IMR-90 (cell line): ENCODE measurements at regions of chr4 and their contacts with region 1.

Region 1: DNA sequence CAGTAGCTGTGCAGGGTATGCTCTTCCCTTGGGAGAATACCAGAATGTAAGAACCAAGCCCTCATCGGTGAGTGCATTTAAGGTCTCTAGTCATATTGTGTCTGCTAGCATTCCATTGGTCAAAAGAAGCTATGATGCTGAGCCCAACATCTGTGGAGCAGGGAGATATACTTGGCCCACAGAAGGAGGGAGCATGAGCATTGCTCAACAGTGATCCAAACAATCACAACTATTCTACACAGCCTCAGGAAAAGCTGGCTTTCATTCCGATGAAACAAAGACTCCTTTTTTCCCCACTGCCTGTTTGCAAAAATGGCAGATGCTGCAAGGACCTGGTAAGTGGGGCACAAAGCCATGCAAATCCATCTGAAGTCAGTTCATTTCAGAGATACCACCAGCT is 80.6 kb upstream of the DHX15 start:
- DNase-seq: peak; percentile 55
- ATAC-seq: peak; percentile 96
- H3K4me3 ChIP-seq: no peak overlapping the region
- H3K27ac ChIP-seq: peak overlapping the region; percentile 72; the same call in 1 of the 2 replicates
- H3K4me1 ChIP-seq: peaks cover 5% of the 10 kb centered on the region
- H3K27me3 ChIP-seq: peaks cover 21% of the 10 kb centered on the region
- CTCF ChIP-seq: no peak
- POLR2A ChIP-seq: no peak
- RAD21 ChIP-seq: no peak

Region 2: DNA sequence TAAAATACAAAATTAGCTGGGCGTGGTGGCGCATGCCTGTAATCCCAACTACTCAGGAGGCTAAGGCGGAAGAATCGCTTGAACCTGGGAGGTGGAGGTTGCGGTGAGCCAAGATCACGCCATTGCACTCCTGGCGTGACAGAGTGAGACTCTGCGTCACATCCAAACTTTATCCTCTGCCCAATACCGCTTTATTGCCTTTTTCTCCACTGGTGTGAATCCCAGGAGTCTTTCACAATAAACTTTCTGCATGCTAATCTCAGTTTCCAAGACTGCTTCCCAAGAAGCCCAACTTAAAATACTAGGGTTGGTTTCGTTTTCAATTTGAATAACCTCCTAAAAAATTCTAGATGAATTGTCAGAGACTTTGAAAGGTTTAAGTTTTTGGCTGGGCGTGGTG is 53.4 kb before region 1 on chr4:
- CTCF ChIA-PET with region 1: no interaction called
- POLR2A ChIA-PET with region 1: no interaction called
- dilution Hi-C with region 1: no loop called
- in situ Hi-C with region 1: no loop called
- intact Hi-C with region 1: no loop called
- DNase-seq: no peak
- ATAC-seq: no peak
- H3K4me3 ChIP-seq: no peak overlapping the region
- H3K27ac ChIP-seq: no peak overlapping the region
- H3K4me1 ChIP-seq: peaks cover 2% of the 10 kb centered on the region; the same call in 1 of the 2 replicates
- H3K27me3 ChIP-seq: peaks cover 1% of the 10 kb centered on the region
- CTCF ChIP-seq: no peak
- POLR2A ChIP-seq: no peak
- RAD21 ChIP-seq: no peak

Region 3: DNA sequence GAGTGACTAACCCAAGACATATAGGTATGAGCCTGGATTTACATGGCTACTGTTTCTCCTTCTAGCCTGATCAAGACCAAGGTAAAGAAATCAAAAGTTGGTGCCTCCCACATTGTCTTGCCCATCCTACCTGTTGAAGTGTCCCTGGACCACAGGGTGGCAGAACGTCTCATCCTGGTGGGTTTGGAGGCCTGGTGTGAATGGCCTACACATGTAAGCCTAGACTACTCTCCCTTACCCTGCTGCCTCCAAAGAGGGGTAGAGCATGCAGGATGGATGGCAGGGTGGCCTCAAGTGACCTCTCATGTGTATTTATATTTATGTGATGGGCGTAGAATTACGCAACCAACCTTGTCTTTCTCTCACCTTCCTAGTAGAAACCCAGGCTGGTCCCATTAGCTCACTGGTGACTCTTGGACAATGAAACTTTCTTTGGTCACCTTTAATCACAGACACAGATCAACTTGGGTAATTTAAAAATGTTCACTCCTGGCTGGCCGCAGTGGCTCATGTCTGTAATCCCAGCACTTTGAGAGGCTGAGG is 57.1 kb after region 1 on chr4:
- CTCF ChIA-PET with region 1: no interaction called
- POLR2A ChIA-PET with region 1: no interaction called
- dilution Hi-C with region 1: no loop called
- in situ Hi-C with region 1: no loop called
- intact Hi-C with region 1: loop called (anchors 10 kb)
- DNase-seq: no peak
- ATAC-seq: no peak
- H3K4me3 ChIP-seq: no peak overlapping the region
- H3K27ac ChIP-seq: no peak overlapping the region
- H3K4me1 ChIP-seq: no peaks in the 10 kb centered on the region
- H3K27me3 ChIP-seq: peaks cover 8% of the 10 kb centered on the region
- CTCF ChIP-seq: no peak
- POLR2A ChIP-seq: no peak
- RAD21 ChIP-seq: 0 out of 2 replicates have a peak, but pooled peaks have one; percentile 11